Activated CD4-positive, alpha-beta T cell treated with anti-CD3 and anti-CD28 coated beads for 36 hours (primary cell): ENCODE measurements at regions of chr6 and their contacts with region 1.

Region 1: DNA sequence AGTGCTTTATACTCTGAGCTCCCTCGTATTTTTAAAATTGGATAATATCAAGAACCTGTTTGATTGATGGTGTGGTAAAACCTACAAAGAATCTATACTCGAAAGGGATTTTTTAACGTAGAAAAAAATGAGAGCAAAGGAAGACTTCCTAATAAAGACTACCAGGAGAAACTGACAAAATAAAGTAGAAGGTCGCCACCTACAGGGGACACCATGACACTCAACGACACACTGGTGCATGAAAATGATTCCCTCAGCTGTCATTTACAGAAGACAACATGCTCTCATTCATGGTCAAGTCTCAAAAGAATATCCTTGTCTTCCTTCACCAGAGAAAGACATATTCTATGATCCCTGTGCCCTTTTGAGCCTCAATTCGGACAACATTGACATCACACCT is 10.1 kb upstream of the NHSL1 start:
- DNase-seq: peak; percentile 66
- ATAC-seq: peak; percentile 60
- H3K4me3 Mint-ChIP-seq: no peak overlapping the region
- H3K27ac Mint-ChIP-seq: no peak overlapping the region
- H3K4me1 Mint-ChIP-seq: peaks cover 2% of the 10 kb centered on the region
- H3K27me3 Mint-ChIP-seq: no peaks in the 10 kb centered on the region

Region 2: GRCh38 chr6:138287144-138287955 is 222.0 kb before region 1 on chr6:
- CTCF ChIA-PET with region 1: no interaction called
- POLR2A ChIA-PET with region 1: no interaction called
- intact Hi-C with region 1: loop called in 1 of 2 experiments (anchors 5 kb)
- DNase-seq: peak; percentile 70
- ATAC-seq: peak; percentile 63
- H3K4me3 Mint-ChIP-seq: no peak overlapping the region
- H3K27ac Mint-ChIP-seq: no peak overlapping the region
- H3K4me1 Mint-ChIP-seq: peaks cover 3% of the 10 kb centered on the region
- H3K27me3 Mint-ChIP-seq: peaks cover 1% of the 10 kb centered on the region